Ascending aorta (tissue), 2 donors: ENCODE measurements at regions of chr13 and their contacts with region 1.

Region 1: GRCh38 chr13:40770934-40771618 is at the start of gene MRPS31:
- DNase-seq: peak; percentile 81 to 97
- H3K4me3 ChIP-seq: peak within 1 kb of the TSS; percentile 59 to 75
- H3K27ac ChIP-seq: peak within 1 kb of the TSS; percentile 71 to 83
- H3K4me1 ChIP-seq: peaks cover 0 to 6% of the 10 kb centered on the region in 2 donors
- H3K27me3 ChIP-seq: no peaks in the 10 kb centered on the region
- CTCF ChIP-seq: peak in 1 of 3 experiments; percentile 2
- total RNA-seq, gene MRPS31: 22.8 TPM

Region 2: GRCh38 chr13:40069173-40070044 is 701.7 kb before region 1 on chr13:
- intact Hi-C with region 1: loop called (anchors 10 kb)
- DNase-seq: peak in 1 of 2 donors; percentile 85
- H3K4me3 ChIP-seq: peak overlapping the region; percentile 37 to 41
- H3K27ac ChIP-seq: no peak overlapping the region
- H3K4me1 ChIP-seq: peaks cover under 1 to 3% of the 10 kb centered on the region in 2 donors
- H3K27me3 ChIP-seq: no peaks in the 10 kb centered on the region
- CTCF ChIP-seq: peak; percentile 83 to 93 (median 89)

Region 3: GRCh38 chr13:40247845-40248244 is 523.2 kb before region 1 on chr13:
- intact Hi-C with region 1: no loop called
- DNase-seq: no peak
- H3K4me3 ChIP-seq: no peak overlapping the region
- H3K27ac ChIP-seq: no peak overlapping the region
- H3K4me1 ChIP-seq: peaks cover 0 to 13% of the 10 kb centered on the region in 2 donors
- H3K27me3 ChIP-seq: no peaks in the 10 kb centered on the region
- CTCF ChIP-seq: no peak

Region 4: DNA sequence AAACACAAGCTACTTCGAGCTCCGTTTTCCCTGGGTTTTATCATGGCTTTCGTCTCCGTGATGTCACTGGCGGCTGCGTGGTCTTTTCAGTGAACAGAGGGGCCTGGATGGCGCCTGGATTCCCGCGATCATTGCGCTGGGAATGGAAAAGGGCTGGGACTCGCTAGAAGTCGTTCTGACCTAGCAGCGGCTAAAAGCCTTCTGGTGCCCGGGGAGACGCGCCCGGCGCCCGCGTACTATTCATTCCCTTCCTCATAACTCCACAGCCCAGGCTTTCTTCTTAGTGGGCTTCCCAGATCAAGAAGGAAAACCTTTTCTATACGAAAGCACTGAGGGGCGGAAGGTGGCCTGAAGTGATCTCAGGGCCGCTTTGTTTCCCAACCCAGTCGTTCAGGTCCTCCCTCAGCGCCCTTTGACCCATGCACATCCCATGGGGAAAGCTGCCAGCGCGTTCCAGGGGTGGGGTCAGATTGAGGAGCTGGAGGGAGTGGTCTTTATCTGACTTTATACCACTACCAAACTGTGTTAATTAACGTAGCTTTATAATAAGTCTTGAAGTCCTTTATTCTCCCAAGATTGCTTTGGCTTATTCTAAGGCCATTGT is 151.5 kb after region 1 on chr13:
- intact Hi-C with region 1: loop called (anchors 10 kb)
- DNase-seq: no peak
- H3K4me3 ChIP-seq: no peak overlapping the region
- H3K27ac ChIP-seq: no peak overlapping the region
- H3K4me1 ChIP-seq: peaks cover 0 to 6% of the 10 kb centered on the region in 2 donors
- H3K27me3 ChIP-seq: no peaks in the 10 kb centered on the region
- CTCF ChIP-seq: no peak

Region 5: GRCh38 chr13:41263261-41264027 is 492.4 kb after region 1 on chr13 and contains the start of gene MTRF1:
- intact Hi-C with region 1: loop called (anchors 10 kb)
- DNase-seq: peak in 1 of 2 donors; percentile 84
- H3K4me3 ChIP-seq: peak within 1 kb of the TSS; percentile 65 to 75
- H3K27ac ChIP-seq: peak within 1 kb of the TSS; percentile 73 to 85
- H3K4me1 ChIP-seq: peaks cover 0 to 6% of the 10 kb centered on the region in 2 donors
- H3K27me3 ChIP-seq: no peaks in the 10 kb centered on the region
- CTCF ChIP-seq: no peak
- total RNA-seq, gene MTRF1: 17.5 TPM